OCI-LY7 (cell line): ENCODE measurements at regions of chr18 and their contacts with region 1.

Region 1: DNA sequence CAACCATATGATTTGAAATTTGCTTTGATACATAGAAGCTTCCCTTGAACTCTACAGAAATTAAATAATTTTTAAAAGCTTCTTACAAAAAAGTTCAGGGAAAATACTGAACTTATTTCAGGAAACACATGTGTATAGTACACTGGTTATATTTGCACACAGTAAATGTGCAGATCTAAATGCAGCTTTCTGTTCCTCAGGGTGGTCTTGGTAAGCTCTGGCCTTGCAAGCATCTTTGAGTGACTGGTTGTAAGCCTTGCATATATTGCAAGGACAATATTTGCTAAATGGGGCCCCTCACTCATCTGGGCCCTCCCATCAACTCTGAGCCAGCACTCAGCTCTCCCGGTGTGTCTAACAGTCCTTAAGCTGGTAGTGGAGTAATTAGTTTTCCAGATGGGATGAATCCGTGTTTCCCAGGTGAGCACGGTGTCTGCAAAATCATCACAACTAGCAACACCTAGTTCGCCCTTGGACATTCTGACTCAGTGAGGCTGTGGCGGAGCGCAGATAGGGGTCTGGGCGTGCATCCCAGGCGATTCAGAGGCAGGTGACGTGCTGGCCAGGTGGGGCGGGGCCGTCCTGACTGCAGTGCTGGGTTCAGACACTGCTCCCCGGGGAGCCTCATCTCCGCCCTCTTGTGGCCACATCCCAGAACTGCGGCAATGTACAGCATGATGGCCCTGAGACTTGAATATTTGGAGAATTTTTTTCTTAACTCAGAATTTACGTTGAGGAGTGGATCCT is 149.6 kb downstream of the MBP start:
- DNase-seq: peak; percentile 78
- H3K4me3 ChIP-seq: peak overlapping the region; percentile 42
- H3K27ac ChIP-seq: no peak overlapping the region
- H3K4me1 ChIP-seq: peaks cover 56% of the 10 kb centered on the region
- CTCF ChIP-seq: peak; percentile 81

Region 2: GRCh38 chr18:76803814-76804213 is 179.2 kb before region 1 on chr18:
- CTCF ChIA-PET with region 1: interaction called, 4 read pairs
- POLR2A ChIA-PET with region 1: no interaction called
- intact Hi-C with region 1: loop called (anchors 2 kb)
- DNase-seq: peak; percentile 56
- H3K4me3 ChIP-seq: no peak overlapping the region
- H3K27ac ChIP-seq: no peak overlapping the region
- H3K4me1 ChIP-seq: peaks cover 3% of the 10 kb centered on the region
- CTCF ChIP-seq: peak; percentile 79

Region 3: DNA sequence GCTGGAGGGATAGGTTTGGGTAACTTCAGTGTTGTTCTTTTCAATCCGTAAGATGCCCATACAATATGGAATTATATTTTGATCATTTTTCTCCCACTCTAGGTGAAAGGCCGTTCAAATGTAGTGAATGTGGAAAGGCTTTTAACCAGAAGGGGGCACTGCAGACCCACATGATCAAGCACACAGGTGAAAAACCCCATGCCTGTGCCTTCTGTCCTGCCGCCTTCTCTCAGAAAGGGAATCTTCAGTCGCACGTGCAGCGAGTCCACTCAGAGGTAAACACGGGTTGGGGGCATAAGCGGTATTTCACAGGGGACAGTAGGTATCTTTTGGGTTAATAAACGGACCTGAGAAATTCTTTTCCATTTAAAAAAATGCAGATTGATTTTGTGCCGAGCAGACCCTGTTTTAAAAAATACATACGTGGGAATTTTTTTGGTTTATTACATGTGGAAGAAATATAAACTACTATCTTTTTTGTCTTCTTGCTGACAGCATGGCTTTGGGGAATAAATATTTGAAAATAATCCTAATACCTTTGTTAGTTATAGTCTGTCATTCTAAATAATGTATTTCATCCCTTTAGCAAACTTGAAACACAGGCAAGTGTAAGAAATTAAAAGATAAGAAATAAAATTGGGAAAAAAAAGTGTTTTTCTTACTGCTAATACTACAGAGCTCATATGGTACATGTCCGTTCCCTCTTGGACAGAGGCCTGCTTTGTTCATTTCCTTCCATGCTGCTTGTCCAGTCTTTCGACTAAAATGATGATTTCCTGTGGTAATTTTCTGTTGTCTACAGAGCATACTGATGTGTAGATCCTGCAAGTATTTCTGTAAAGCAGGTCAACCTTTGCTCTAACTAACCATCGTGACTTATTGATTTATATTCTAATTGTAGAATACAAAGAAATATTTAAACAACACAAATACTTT is 107.4 kb before region 1 on chr18:
- CTCF ChIA-PET with region 1: no interaction called
- POLR2A ChIA-PET with region 1: no interaction called
- intact Hi-C with region 1: loop called (anchors 1 kb)
- DNase-seq: peak; percentile 34
- H3K4me3 ChIP-seq: no peak overlapping the region
- H3K27ac ChIP-seq: no peak overlapping the region
- H3K4me1 ChIP-seq: no peaks in the 10 kb centered on the region
- CTCF ChIP-seq: peak; percentile 78

Region 4: GRCh38 chr18:76922107-76922506 is 60.9 kb before region 1 on chr18:
- CTCF ChIA-PET with region 1: no interaction called
- POLR2A ChIA-PET with region 1: no interaction called
- intact Hi-C with region 1: loop called (anchors 1 kb)
- DNase-seq: peak; percentile 74
- H3K4me3 ChIP-seq: no peak overlapping the region
- H3K27ac ChIP-seq: no peak overlapping the region
- H3K4me1 ChIP-seq: peaks cover 5% of the 10 kb centered on the region
- CTCF ChIP-seq: peak; percentile 78

Region 5: DNA sequence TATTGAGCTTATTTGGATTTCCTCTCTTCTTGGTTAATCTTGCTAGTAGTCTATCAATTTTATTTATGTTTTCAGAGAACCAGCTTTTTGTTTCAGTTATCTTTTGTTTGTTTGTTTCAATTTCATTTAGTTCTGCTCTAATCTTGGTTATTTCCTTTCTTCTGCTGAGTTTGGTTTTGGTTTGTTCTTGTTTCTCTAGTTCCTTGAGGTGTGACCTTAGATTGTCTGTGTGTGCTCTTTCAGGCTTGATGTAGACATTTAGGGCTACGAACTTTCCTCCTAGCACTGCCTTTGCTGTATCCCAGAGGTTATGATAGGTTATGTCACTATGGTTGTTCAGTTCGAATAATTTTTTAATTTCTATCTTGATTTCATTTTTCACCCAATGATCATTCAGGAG is 19.1 kb before region 1 on chr18:
- CTCF ChIA-PET with region 1: interaction called, 10 read pairs
- POLR2A ChIA-PET with region 1: interaction called, 13 read pairs
- intact Hi-C with region 1: loop called (anchors 1 kb)
- DNase-seq: no peak
- H3K4me3 ChIP-seq: peak overlapping the region; percentile 19
- H3K27ac ChIP-seq: peak overlapping the region; percentile 30
- H3K4me1 ChIP-seq: peaks cover 48% of the 10 kb centered on the region
- CTCF ChIP-seq: no peak

Region 6: GRCh38 chr18:77124452-77124922 is 141.5 kb after region 1 on chr18:
- CTCF ChIA-PET with region 1: no interaction called
- POLR2A ChIA-PET with region 1: no interaction called
- intact Hi-C with region 1: loop called (anchors 5 kb)
- DNase-seq: peak; percentile 49
- H3K4me3 ChIP-seq: peak overlapping the region; percentile 57
- H3K27ac ChIP-seq: peak overlapping the region; percentile 69
- H3K4me1 ChIP-seq: peaks cover 92% of the 10 kb centered on the region
- CTCF ChIP-seq: no peak